Common myeloid progenitor, CD34-positive (primary cell): ENCODE measurements at regions of chr10 and their contacts with region 1.

Region 1: DNA sequence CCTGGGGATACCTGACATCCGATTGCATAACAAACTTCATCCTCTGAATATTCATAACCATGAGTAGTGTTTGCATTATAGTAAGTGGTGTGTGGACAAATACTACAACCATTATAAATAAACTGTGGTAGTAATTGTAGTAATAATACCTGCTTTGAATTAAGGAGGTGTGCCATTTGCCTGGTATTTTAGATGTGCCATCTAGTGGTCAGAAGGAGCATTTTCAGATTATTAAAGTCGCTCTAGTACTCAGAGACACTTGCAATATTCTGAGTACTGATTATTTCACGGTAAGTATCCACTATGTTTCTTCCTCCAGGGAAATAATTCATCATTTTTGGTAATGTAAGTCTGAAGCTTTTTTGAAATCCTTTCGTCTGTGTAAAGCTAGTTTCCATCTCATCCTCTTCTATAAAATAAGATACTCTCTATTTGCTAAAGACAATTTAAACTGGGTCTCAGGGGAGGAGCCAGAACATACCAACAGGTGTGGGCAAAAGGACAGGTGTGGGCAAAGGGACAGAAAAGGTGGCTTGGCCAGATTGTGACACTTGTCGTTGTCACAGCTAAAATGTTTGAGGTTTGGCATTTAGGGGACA is 115.3 kb upstream of the WDR11 start:
- DNase-seq: peak in 2 of 3 donors; percentile 53 to 55
- H3K4me3 ChIP-seq: no peak overlapping the region
- H3K27ac ChIP-seq: no peak overlapping the region
- H3K4me1 ChIP-seq: no peaks in the 10 kb centered on the region
- H3K27me3 ChIP-seq: no peaks in the 10 kb centered on the region

Region 2: GRCh38 chr10:120423431-120424197 is 312.3 kb before region 1 on chr10:
- CTCF ChIA-PET with region 1: interaction called, 37 read pairs
- POLR2A ChIA-PET with region 1: no interaction called
- DNase-seq: peak; percentile 58 to 71 (median 68)
- H3K4me3 ChIP-seq: no peak overlapping the region
- H3K27ac ChIP-seq: no peak overlapping the region
- H3K4me1 ChIP-seq: no peaks in the 10 kb centered on the region
- H3K27me3 ChIP-seq: no peaks in the 10 kb centered on the region

Region 3: GRCh38 chr10:120746001-120746777 is 10.3 kb after region 1 on chr10:
- CTCF ChIA-PET with region 1: interaction called, 10 read pairs
- POLR2A ChIA-PET with region 1: no interaction called
- DNase-seq: no peak
- H3K4me3 ChIP-seq: no peak overlapping the region
- H3K27ac ChIP-seq: no peak overlapping the region
- H3K4me1 ChIP-seq: peaks cover 0 to 13% (median 5%) of the 10 kb centered on the region in 4 experiments
- H3K27me3 ChIP-seq: no peaks in the 10 kb centered on the region

Region 4: DNA sequence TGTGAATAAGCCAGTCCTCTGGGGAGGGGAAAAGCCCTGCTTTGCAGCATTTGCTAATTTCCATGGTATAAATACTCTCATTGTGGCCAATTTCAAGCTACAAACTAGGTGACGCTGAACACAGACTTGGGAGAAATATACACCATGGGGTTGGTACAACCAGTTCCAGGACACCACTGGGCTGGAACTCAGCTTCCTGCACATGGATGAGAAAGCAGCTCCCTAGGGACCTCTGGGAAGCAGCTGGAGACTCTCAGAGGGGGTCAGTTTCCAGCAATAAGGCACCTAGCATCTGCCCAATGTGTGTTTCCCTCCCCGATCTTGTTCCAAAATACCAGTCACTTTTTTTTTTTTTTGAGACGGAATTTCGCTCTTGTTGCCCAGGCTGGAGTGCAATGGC is 58.5 kb after region 1 on chr10:
- CTCF ChIA-PET with region 1: no interaction called
- POLR2A ChIA-PET with region 1: no interaction called
- DNase-seq: no peak
- H3K4me3 ChIP-seq: no peak overlapping the region
- H3K27ac ChIP-seq: no peak overlapping the region
- H3K4me1 ChIP-seq: peaks cover 0 to 15% (median 8%) of the 10 kb centered on the region in 4 experiments
- H3K27me3 ChIP-seq: no peaks in the 10 kb centered on the region